AG04449 (cell line): ENCODE measurements at regions of chr17 and their contacts with region 1.

Region 1: GRCh38 chr17:7687908-7688807 is at the start of gene WRAP53:
- DNase-seq: peak; percentile 94
- H3K4me3 ChIP-seq: peak within 1 kb of the TSS; percentile 99
- CTCF ChIP-seq: peak; percentile 94

Region 2: GRCh38 chr17:7454980-7455379 is 233.2 kb before region 1 on chr17:
- CTCF ChIA-PET with region 1: no interaction called
- POLR2A ChIA-PET with region 1: no interaction called
- DNase-seq: no peak
- H3K4me3 ChIP-seq: peak overlapping the region; percentile 83
- CTCF ChIP-seq: no peak

Region 3: DNA sequence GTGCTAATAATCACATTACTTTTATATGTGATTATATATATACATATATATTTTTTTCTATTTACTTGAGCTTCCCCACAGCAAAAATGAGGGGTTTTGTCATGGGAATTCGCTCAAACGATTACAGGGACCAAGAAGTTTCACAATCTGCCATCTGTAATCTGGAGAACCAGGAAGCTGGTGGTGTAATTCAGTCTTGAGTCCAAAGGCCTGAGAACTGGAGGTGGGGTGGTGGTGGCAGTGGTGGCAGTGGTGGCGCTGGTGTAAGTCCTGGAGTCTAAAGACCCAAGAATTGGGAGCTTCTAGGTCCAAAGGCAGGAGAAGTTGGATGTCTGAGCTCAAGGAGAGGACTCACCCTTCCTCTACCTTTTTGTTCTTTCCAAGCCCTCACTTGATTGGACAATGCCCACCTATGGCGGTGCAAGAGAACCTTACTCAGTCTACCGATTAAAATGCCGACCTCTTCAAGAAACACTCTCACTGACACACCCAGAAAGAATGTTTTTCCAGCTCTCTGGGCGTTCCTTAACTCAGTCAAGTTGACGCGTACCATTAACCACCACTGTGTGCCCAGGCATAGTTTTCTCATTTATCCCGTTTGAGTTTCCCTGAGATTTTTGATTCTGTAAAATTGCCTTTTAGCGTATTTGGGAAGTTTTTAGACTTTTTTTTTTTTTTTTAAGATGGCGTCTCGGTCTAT is 172.1 kb before region 1 on chr17:
- CTCF ChIA-PET with region 1: interaction called, 40 read pairs
- POLR2A ChIA-PET with region 1: no interaction called
- DNase-seq: no peak
- H3K4me3 ChIP-seq: no peak overlapping the region
- CTCF ChIP-seq: no peak

Region 4: DNA sequence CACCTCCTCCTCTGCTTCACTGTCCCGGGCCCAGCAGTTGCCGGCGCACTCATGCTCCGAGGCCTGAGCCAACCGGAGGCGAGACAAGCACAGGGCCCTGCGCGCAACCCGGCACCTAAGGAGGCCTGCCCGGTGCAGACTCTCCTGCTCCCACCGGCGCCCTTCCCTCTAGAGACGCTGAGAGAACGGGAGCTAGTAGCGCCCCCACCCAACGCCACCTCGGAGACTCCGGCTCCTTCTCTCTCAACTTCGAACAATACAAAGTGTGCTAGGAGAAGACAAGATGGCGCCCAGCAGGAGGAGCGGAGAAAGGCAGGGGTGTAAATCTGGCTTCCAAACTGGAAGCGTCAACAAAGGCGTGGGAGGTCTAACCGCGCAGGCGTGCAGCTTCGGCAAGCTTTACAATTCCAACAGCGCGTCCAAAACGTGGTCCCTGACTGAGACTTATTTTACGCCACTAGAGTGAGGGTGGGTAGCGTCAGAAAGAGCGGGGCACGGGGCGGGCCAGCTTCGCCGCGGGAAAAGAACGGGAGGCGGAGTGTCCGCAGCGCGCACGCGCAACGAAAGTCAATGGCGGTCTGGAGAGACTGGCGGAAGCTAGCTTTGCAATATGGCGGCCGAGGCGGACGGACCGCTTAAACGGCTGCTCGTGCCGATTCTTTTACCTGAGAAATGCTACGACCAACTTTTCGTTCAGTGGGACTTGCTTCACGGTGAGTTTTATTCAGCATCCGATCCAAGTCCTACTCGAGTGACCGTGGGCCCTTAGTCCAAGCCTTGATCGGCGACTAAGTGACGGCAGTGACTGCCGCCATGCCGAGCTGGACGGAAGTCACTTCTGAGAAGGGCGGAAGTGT is 104.7 kb before region 1 on chr17 and contains the start of gene MPDU1:
- CTCF ChIA-PET with region 1: interaction called, 57 read pairs
- POLR2A ChIA-PET with region 1: interaction called, 21 read pairs
- DNase-seq: peak; percentile 73
- H3K4me3 ChIP-seq: peak within 1 kb of the TSS; percentile 81
- CTCF ChIP-seq: no peak

Region 5: DNA sequence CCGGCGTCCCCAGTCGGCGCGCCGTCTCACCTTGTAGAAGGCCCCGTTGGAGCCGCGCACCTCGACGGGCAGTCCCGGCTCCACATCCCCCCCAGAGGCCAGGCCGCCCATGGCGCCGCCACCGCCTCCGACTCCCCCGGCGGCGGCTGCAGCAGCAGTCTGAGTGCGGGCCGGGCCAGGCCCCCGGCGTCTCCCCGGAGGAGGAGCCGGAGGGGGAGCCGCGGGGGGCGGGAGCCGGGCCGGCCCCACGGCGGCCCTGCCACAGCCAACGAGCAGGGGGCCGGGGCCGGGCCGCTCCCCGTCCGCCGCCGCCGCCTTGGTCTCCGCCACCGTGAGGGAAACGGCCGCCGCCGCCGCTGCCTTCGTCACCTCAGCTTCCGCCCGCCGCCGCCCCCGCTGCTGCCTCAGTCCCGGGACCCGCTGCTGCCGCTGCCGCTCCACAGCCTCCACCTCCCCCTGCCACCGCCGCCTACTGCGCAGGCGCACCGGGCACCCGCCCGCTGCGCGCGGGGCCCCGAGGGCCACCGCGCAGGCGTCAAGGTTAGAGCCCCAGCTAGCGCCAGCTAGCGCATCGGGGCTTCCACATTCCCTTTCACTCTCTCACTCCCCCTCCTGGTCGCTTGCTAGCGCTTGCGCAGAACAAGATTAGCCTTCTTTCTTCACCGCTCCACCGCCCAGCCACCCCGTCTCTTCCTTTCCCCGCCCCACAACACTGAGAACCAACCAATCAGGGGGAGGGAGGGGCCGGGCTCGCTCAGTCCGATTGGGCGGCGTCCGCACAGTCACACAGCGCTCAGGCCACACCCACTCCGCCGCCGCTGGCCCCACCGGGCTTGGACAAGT is 73.5 kb before region 1 on chr17 and contains the start of gene FXR2:
- CTCF ChIA-PET with region 1: interaction called, 21 read pairs
- POLR2A ChIA-PET with region 1: interaction called, 11 read pairs
- DNase-seq: peak; percentile 99
- H3K4me3 ChIP-seq: peak within 1 kb of the TSS; percentile 87
- CTCF ChIP-seq: peak; percentile 74

Region 6: DNA sequence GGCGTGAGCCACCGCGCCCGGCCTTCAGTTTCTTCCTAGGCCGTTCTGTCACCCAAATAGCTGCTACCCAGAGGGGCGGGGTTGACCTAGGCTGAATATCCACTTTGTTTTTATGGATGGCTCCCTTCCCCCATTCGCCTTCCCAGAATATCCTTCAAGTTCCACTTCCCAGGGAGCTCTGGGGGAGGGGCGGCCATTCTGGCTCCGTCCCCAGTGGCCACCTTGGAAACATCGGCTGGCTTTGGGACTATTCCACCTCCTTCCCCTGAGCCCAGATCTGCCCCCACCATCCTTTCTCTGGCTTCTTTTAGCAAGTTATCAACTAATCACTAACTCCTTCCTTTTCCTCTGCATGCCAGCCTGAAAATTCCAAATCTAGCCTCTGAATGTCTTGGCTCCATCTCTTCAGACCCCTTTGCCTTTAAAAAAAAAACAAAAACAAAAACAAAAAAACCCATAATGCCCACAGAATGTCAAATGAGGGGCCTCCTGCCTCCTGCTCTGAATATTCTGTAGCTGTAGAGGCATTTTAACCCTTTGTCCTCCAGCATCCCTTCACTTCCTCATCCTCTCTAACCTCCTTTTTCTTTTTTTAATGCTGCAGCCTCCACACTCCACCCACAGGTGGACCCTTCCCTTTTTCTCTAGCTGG is 31.1 kb before region 1 on chr17:
- CTCF ChIA-PET with region 1: interaction called, 20 read pairs
- POLR2A ChIA-PET with region 1: interaction called, 4 read pairs
- DNase-seq: no peak
- H3K4me3 ChIP-seq: no peak overlapping the region
- CTCF ChIP-seq: no peak

Region 7: DNA sequence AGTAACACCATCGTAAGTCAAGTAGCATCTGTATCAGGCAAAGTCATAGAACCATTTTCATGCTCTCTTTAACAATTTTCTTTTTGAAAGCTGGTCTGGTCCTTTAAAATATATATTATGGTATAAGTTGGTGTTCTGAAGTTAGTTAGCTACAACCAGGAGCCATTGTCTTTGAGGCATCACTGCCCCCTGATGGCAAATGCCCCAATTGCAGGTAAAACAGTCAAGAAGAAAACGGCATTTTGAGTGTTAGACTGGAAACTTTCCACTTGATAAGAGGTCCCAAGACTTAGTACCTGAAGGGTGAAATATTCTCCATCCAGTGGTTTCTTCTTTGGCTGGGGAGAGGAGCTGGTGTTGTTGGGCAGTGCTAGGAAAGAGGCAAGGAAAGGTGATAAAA is 14.9 kb before region 1 on chr17:
- CTCF ChIA-PET with region 1: interaction called, 22 read pairs
- POLR2A ChIA-PET with region 1: interaction called, 4 read pairs
- DNase-seq: no peak
- H3K4me3 ChIP-seq: no peak overlapping the region
- CTCF ChIP-seq: peak; percentile 6

Region 8: GRCh38 chr17:7716901-7717755 is 29.0 kb after region 1 on chr17 and contains the start of gene DNAH2:
- CTCF ChIA-PET with region 1: interaction called, 28 read pairs
- POLR2A ChIA-PET with region 1: interaction called, 4 read pairs
- DNase-seq: peak; percentile 24
- H3K4me3 ChIP-seq: peak within 1 kb of the TSS; percentile 71
- CTCF ChIP-seq: peak; percentile 69